A673 (cell line): ENCODE measurements at regions of chr10 and their contacts with region 1.

Region 1: DNA sequence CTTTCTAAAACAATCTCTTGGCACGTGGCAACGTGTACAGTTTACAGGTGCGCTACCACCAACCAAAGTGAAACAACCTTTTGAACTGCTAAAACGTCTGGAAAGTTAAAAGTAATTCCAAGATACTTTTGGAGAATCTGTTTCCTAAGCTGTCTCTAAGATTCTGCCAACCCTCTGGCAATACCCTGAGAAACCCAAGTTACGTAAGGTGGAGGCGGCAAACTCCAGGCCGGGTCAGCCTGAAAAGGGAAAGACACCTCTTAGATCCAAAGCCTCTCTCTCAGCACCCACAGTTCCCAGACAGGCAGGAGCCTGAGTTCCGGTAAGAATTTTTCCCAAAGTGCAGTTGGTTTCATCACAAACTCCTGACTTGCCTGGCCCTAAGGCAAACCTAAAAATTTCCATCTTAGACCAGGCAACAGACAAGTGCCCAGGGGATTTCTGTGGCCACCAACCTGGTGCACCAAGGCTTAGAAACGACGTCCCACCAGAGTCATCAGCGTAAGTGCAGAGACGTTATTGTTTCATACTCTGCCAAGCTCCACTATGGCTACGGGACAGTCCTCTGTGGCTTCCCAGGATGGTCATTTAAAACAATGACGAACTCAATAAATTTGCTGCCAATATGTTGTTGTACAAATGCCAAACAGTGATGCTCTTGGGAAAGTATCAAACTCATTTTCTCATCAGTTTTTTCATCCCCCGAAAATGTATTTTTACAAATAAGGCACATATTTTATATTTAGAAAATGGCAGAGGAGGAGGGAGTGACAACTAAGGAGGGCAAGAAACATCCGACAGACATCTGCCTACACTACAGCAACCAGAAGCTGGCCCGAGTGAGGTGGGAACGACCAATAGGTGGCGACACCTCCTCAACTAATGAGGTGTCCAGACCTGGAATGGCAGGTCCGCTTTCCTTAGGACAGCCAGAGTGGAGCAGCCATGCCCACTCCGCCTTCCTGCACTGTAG is 205.8 kb upstream of the FRMD4A start:
- DNase-seq: peak; percentile 72
- H3K4me3 ChIP-seq: no peak overlapping the region
- H3K27ac ChIP-seq: no peak overlapping the region
- H3K4me1 ChIP-seq: no peaks in the 10 kb centered on the region
- H3K27me3 ChIP-seq: no peaks in the 10 kb centered on the region
- CTCF ChIP-seq: peak; percentile 80

Region 2: GRCh38 chr10:14163377-14164086 is 373.0 kb before region 1 on chr10:
- CTCF ChIA-PET with region 1: no interaction called
- POLR2A ChIA-PET with region 1: no interaction called
- intact Hi-C with region 1: no loop called
- DNase-seq: no peak
- H3K4me3 ChIP-seq: no peak overlapping the region
- H3K27ac ChIP-seq: no peak overlapping the region
- H3K4me1 ChIP-seq: no peaks in the 10 kb centered on the region
- H3K27me3 ChIP-seq: peaks cover 53% of the 10 kb centered on the region
- CTCF ChIP-seq: no peak

Region 3: DNA sequence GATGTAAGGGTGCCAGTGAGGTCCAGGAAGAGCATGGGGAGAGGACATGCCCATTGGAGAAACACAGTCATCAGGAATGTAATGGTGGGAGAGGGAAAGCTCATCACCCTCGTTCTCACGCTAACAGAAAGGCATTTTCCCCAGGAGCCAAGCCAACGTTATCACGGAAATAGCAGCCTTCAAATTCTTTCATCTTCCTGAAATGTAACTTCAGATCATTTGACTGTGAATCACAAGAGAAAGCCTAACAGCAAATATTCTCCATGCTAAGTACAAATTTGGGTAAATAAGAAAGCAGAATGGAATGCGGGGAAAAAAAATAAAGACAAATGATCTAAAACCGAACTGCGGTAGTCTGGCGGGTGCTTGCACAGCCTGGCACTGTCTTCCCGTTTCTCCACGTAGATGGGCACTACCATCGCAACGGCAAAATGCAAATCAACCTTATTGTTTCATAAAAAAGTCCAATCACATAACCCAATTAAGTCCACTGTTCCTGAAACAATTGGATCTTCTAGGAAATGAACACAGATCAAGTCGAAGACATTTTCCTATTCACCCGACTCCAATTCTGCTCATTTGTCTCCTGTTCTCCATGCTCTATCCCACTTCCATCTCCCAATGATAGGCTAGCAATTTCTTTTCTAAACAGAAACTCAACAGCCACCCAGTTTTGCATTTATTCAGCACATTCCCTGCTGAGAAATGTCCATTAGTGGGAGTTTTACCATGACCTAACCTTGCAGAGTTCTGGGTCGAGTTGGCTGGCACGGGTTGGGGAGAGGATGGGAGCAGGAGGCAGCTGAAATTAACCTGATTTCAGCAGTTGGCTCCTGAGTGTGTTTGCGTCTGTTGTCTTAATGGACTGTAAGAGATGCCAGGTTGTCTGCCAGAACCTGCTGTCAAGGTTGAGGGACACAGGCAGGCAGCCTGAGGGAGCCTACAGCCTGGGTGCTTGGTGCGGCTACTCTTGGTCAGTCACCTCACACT is 131.2 kb before region 1 on chr10:
- CTCF ChIA-PET with region 1: no interaction called
- POLR2A ChIA-PET with region 1: no interaction called
- intact Hi-C with region 1: no loop called
- DNase-seq: no peak
- H3K4me3 ChIP-seq: no peak overlapping the region
- H3K27ac ChIP-seq: no peak overlapping the region
- H3K4me1 ChIP-seq: peaks cover 39% of the 10 kb centered on the region
- H3K27me3 ChIP-seq: no peaks in the 10 kb centered on the region
- CTCF ChIP-seq: no peak

Region 4: GRCh38 chr10:14810969-14811953 is 274.7 kb after region 1 on chr10:
- CTCF ChIA-PET with region 1: no interaction called
- POLR2A ChIA-PET with region 1: no interaction called
- intact Hi-C with region 1: loop called (anchors 1 kb)
- DNase-seq: no peak
- H3K4me3 ChIP-seq: no peak overlapping the region
- H3K27ac ChIP-seq: no peak overlapping the region
- H3K4me1 ChIP-seq: no peaks in the 10 kb centered on the region
- H3K27me3 ChIP-seq: no peaks in the 10 kb centered on the region
- CTCF ChIP-seq: no peak

Region 5: DNA sequence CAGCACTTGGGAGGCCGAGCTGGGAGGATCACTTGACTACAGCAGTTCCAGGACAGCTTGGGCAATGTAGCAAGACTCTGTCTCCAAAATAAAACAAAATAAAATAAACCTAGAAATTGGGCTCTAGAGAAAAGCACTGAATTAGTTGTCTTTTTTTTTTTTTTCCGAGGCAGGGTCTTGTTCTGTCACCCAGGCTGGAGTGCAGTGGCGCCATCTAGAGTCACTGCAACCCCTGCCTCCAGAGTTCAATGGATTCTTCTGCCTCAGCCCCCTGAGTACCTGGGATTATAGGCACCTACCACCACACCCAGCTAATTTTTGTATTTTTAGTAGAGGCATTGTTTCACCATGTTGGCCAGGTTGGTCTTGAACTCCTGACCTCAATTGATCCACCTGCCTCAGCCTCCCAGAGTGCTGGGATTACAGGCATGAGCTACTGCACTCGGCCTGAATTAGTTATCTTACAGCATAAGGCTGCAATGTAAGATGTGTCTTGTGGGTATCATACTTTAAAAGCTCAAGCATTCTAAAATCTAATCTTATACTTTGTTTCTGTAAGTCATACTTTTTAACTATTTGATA is 435.4 kb after region 1 on chr10:
- CTCF ChIA-PET with region 1: no interaction called
- POLR2A ChIA-PET with region 1: no interaction called
- intact Hi-C with region 1: loop called (anchors 10 kb)
- DNase-seq: peak; percentile 46
- H3K4me3 ChIP-seq: no peak overlapping the region
- H3K27ac ChIP-seq: no peak overlapping the region
- H3K4me1 ChIP-seq: no peaks in the 10 kb centered on the region
- H3K27me3 ChIP-seq: no peaks in the 10 kb centered on the region
- CTCF ChIP-seq: peak; percentile 80